B cell (primary cell): ENCODE measurements at regions of chr19 and their contacts with region 1.

Region 1: GRCh38 chr19:12628040-12629022 is 17.6 kb downstream of the ZNF791 start:
- DNase-seq: no peak
- ATAC-seq: no peak
- H3K4me3 ChIP-seq: no peak overlapping the region
- H3K4me3 Mint-ChIP-seq: no peak overlapping the region
- H3K27ac ChIP-seq: no peak overlapping the region
- H3K27ac Mint-ChIP-seq: no peak overlapping the region
- H3K4me1 ChIP-seq: no peaks in the 10 kb centered on the region
- H3K4me1 Mint-ChIP-seq: peaks cover 3% of the 10 kb centered on the region
- H3K27me3 ChIP-seq: no peaks in the 10 kb centered on the region
- H3K27me3 Mint-ChIP-seq: no peaks in the 10 kb centered on the region
- CTCF ChIP-seq: no peak

Region 2: GRCh38 chr19:10742476-10742875 is 1885.9 kb before region 1 on chr19:
- CTCF ChIA-PET with region 1: no interaction called
- POLR2A ChIA-PET with region 1: interaction called, 15 read pairs
- intact Hi-C with region 1: no loop called
- DNase-seq: no peak
- ATAC-seq: no peak
- H3K4me3 ChIP-seq: no peak overlapping the region
- H3K4me3 Mint-ChIP-seq: peak overlapping the region; percentile 39
- H3K27ac ChIP-seq: peak overlapping the region in 1 of 2 donors; percentile 15
- H3K27ac Mint-ChIP-seq: peak overlapping the region; percentile 34
- H3K4me1 ChIP-seq: peaks cover 36 to 62% of the 10 kb centered on the region in 2 donors
- H3K4me1 Mint-ChIP-seq: peaks cover 62% of the 10 kb centered on the region
- H3K27me3 ChIP-seq: no peaks in the 10 kb centered on the region
- H3K27me3 Mint-ChIP-seq: no peaks in the 10 kb centered on the region
- CTCF ChIP-seq: no peak

Region 3: GRCh38 chr19:12527034-12527836 is 101.1 kb before region 1 on chr19:
- CTCF ChIA-PET with region 1: no interaction called
- POLR2A ChIA-PET with region 1: no interaction called
- intact Hi-C with region 1: no loop called
- DNase-seq: peak; percentile 24
- ATAC-seq: no peak
- H3K4me3 ChIP-seq: peak overlapping the region in 1 of 5 experiments; percentile 25
- H3K4me3 Mint-ChIP-seq: no peak overlapping the region
- H3K27ac ChIP-seq: no peak overlapping the region
- H3K27ac Mint-ChIP-seq: no peak overlapping the region
- H3K4me1 ChIP-seq: no peaks in the 10 kb centered on the region
- H3K4me1 Mint-ChIP-seq: no peaks in the 10 kb centered on the region
- H3K27me3 ChIP-seq: no peaks in the 10 kb centered on the region
- H3K27me3 Mint-ChIP-seq: no peaks in the 10 kb centered on the region
- CTCF ChIP-seq: no peak

Region 4: GRCh38 chr19:12639901-12640613 is 11.7 kb after region 1 on chr19:
- CTCF ChIA-PET with region 1: interaction called, 12 read pairs
- POLR2A ChIA-PET with region 1: no interaction called
- intact Hi-C with region 1: no loop called
- DNase-seq: peak; percentile 91
- ATAC-seq: peak; percentile 95
- H3K4me3 ChIP-seq: peak overlapping the region in 4 of 5 experiments; percentile 18 to 48 (median 36)
- H3K4me3 Mint-ChIP-seq: peak overlapping the region; percentile 82
- H3K27ac ChIP-seq: peak overlapping the region; percentile 22 to 60
- H3K27ac Mint-ChIP-seq: peak overlapping the region; percentile 78
- H3K4me1 ChIP-seq: peaks cover 8 to 12% of the 10 kb centered on the region in 2 donors
- H3K4me1 Mint-ChIP-seq: peaks cover 18% of the 10 kb centered on the region
- H3K27me3 ChIP-seq: no peaks in the 10 kb centered on the region
- H3K27me3 Mint-ChIP-seq: no peaks in the 10 kb centered on the region
- CTCF ChIP-seq: peak; percentile 89

Region 5: DNA sequence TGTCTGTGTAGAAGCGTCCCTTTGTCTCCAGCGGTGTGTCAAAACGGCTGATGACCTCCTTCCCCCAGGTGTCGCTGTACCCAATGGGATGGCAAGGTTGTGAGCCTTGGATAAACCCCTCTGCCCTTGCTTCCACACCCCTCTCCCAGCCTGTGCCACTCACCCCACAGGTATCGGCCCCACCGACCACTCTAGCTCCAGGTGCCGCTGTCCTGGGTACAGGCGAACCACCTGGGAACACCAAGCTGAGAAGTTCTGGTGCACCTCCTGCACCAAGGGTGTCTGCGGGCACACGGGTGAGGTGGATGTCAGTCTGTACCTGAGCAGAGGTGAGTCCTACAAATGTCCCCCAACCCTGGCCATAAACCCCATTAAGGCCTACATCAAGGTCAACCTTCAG is 21.6 kb after region 1 on chr19:
- CTCF ChIA-PET with region 1: no interaction called
- POLR2A ChIA-PET with region 1: interaction called, 10 read pairs
- intact Hi-C with region 1: no loop called
- DNase-seq: no peak
- ATAC-seq: no peak
- H3K4me3 ChIP-seq: no peak overlapping the region
- H3K4me3 Mint-ChIP-seq: no peak overlapping the region
- H3K27ac ChIP-seq: no peak overlapping the region
- H3K27ac Mint-ChIP-seq: peak overlapping the region; percentile 10
- H3K4me1 ChIP-seq: peaks cover 0 to 10% of the 10 kb centered on the region in 2 donors
- H3K4me1 Mint-ChIP-seq: peaks cover 7% of the 10 kb centered on the region
- H3K27me3 ChIP-seq: no peaks in the 10 kb centered on the region
- H3K27me3 Mint-ChIP-seq: no peaks in the 10 kb centered on the region
- CTCF ChIP-seq: no peak

Region 6: DNA sequence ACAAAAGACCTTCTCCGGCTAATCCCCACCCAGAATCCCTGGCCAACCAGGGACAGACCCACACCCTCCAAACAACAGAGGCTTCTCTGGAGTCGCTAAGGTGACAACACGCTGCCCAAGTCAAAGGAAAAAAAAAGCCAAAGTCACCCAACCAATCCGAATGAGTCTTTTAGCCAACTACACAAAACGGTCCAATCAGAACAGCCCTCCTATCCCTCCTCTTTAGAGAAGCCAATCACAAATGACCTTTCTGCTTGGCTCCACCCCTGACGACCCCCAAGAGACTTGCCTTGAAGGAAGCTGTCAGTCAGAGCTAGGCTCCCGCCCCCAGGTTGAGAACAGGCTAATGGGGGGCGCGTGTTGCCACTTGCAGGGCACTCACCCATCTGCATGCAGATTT is 74.7 kb after region 1 on chr19:
- CTCF ChIA-PET with region 1: no interaction called
- POLR2A ChIA-PET with region 1: no interaction called
- intact Hi-C with region 1: no loop called
- DNase-seq: peak; percentile 40
- ATAC-seq: no peak
- H3K4me3 ChIP-seq: no peak overlapping the region
- H3K4me3 Mint-ChIP-seq: no peak overlapping the region
- H3K27ac ChIP-seq: no peak overlapping the region
- H3K27ac Mint-ChIP-seq: no peak overlapping the region
- H3K4me1 ChIP-seq: no peaks in the 10 kb centered on the region
- H3K4me1 Mint-ChIP-seq: peaks cover 2% of the 10 kb centered on the region
- H3K27me3 ChIP-seq: no peaks in the 10 kb centered on the region
- H3K27me3 Mint-ChIP-seq: no peaks in the 10 kb centered on the region
- CTCF ChIP-seq: no peak